Panc1 (cell line): ENCODE measurements at regions of chr1 and their contacts with region 1.

Region 1: GRCh38 chr1:97144527-97144926 is 422.9 kb downstream of the PTBP2 start:
- DNase-seq: no peak
- ATAC-seq: peak; percentile 77
- H3K4me3 ChIP-seq: no peak overlapping the region
- H3K27ac ChIP-seq: no peak overlapping the region
- H3K4me1 ChIP-seq: no peaks in the 10 kb centered on the region
- H3K27me3 ChIP-seq: no peaks in the 10 kb centered on the region
- CTCF ChIP-seq: no peak

Region 2: GRCh38 chr1:97238816-97239215 is 94.3 kb after region 1 on chr1:
- CTCF ChIA-PET with region 1: no interaction called
- POLR2A ChIA-PET with region 1: interaction called, 19 read pairs
- in situ Hi-C with region 1: no loop called
- intact Hi-C with region 1: no loop called
- DNase-seq: no peak
- ATAC-seq: no peak
- H3K4me3 ChIP-seq: no peak overlapping the region
- H3K27ac ChIP-seq: no peak overlapping the region
- H3K4me1 ChIP-seq: no peaks in the 10 kb centered on the region
- H3K27me3 ChIP-seq: no peaks in the 10 kb centered on the region
- CTCF ChIP-seq: no peak